ENCODE measurements at regions of chr22 and their contacts with region 1.

Region 1: GRCh38 chr22:23970816-23971486 is 3.3 kb downstream of the DDT start:
- DNase-seq: peak; percentile 31
- H3K4me3 ChIP-seq: no peak overlapping the region
- H3K27ac ChIP-seq: no peak overlapping the region
- H3K4me1 ChIP-seq: peaks cover 0 to 21% (median 13%) of the 10 kb centered on the region in 4 donors
- H3K27me3 ChIP-seq: no peaks in the 10 kb centered on the region
- CTCF ChIP-seq: no peak
- EP300 ChIP-seq: no peak
- POLR2A ChIP-seq: no peak

Region 2: DNA sequence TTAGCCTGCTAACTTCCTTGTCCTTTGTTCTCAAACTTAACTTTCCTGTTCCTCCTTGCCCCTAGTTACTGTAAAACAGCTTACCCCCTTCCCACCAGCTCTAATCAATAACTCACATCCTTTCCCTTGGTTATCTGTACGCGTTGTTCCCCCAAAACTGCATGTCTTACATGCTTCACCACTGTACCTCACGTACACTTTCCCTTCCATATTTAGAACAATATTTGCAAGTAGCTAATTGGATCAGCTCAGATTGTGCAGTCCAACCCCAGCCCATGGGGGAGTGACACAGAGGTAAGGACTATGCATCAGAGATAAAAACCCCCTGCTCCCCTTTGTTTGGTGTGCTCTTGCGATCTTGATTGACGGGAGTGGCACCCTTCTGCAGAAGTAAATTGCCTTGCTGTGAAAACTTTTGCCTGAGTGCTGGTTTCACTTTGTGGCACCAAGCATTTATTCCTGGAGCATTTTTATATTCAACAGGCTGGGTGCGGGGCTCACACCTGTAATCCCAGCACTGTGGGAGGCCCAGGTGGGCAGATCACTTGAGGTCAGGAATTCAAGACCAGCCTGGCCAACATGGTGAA is 45.8 kb before region 1 on chr22:
- intact Hi-C with region 1: loop called (anchors 5 kb)
- DNase-seq: no peak
- H3K4me3 ChIP-seq: no peak overlapping the region
- H3K27ac ChIP-seq: no peak overlapping the region
- H3K4me1 ChIP-seq: peaks cover 0 to 3% (median 1%) of the 10 kb centered on the region in 4 donors
- H3K27me3 ChIP-seq: no peaks in the 10 kb centered on the region
- CTCF ChIP-seq: no peak
- EP300 ChIP-seq: no peak
- POLR2A ChIP-seq: no peak

Measured in esophagus muscularis mucosa (tissue), 4 donors.